ENCODE measurements at regions of chr1 and their contacts with region 1.

Region 1: GRCh38 chr1:248807067-248807737 is 18.5 kb downstream of the SH3BP5L start:
- DNase-seq: peak; percentile 77
- H3K4me3 Mint-ChIP-seq: no peak overlapping the region
- H3K27ac Mint-ChIP-seq: no peak overlapping the region
- H3K4me1 Mint-ChIP-seq: peaks cover 9% of the 10 kb centered on the region
- H3K27me3 Mint-ChIP-seq: no peaks in the 10 kb centered on the region

Region 2: DNA sequence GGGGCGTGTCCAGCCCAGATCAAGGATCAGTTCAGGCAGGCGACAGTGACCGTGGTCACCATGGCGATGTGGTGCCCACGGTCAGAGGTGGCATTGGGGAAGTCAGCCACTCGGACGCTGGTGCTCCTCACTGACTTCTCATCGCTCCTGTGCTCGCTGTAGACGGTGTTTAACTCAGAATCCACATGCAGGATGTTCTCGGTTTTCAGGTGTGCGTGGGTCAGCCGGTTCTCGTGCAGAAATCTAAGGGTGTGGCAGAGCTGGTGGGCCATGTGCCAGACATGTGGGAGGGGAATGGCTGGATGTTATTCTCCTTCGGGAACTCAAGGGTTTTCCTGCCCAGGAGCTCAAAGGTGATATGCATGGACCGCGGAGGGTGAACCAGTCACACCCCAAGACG is 870.8 kb before region 1 on chr1:
- CTCF ChIA-PET with region 1: no interaction called
- intact Hi-C with region 1: loop called (anchors 1 kb)
- DNase-seq: no peak
- H3K4me3 Mint-ChIP-seq: no peak overlapping the region
- H3K27ac Mint-ChIP-seq: no peak overlapping the region
- H3K4me1 Mint-ChIP-seq: no peaks in the 10 kb centered on the region
- H3K27me3 Mint-ChIP-seq: peaks cover 4% of the 10 kb centered on the region

Region 3: DNA sequence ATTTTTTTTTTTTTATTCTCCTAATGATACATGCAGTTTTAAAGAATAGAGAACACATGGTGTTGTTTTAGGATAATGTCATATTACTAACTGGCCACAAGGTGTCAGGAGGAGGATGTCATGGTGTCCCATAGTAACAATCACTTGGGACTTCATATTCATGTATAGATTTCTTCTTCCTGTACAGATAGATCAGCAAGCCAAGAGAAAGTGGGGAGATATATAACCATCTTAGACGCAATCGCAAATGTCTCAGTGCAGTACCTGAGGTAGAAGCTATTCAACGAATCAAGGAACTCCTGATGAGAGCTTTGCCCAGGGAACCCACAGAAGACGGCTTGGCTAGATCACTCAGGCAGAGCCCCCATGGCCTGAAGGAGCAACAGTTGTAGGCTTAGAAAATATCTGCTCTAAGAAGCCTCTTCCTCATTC is 184.6 kb before region 1 on chr1:
- CTCF ChIA-PET with region 1: interaction called, 53 read pairs
- intact Hi-C with region 1: loop called (anchors 1 kb)
- DNase-seq: peak; percentile 19
- H3K4me3 Mint-ChIP-seq: no peak overlapping the region
- H3K27ac Mint-ChIP-seq: no peak overlapping the region
- H3K4me1 Mint-ChIP-seq: peaks cover 2% of the 10 kb centered on the region
- H3K27me3 Mint-ChIP-seq: no peaks in the 10 kb centered on the region

Region 4: DNA sequence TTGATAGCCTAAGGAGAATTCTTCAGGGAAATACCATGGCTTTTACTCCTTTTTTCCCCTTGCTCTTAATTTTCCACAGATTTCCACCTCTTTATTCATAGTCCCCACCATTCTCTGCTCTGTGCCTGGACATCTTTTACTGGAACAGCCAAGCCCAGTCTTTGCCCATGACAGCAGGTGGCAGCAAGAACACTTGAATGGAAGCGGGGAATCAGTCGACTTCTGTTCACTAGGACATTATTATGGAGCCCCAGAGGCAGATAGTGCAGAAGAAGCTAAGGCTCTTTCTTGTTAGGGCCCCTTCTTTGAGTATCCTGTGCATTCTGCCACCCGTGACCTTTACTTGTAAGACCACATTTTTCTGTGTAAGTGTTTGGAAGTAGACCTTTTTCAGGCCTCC is 110.9 kb before region 1 on chr1:
- CTCF ChIA-PET with region 1: interaction called, 4 read pairs
- intact Hi-C with region 1: loop called (anchors 1 kb)
- DNase-seq: peak; percentile 41
- H3K4me3 Mint-ChIP-seq: no peak overlapping the region
- H3K27ac Mint-ChIP-seq: no peak overlapping the region
- H3K4me1 Mint-ChIP-seq: no peaks in the 10 kb centered on the region
- H3K27me3 Mint-ChIP-seq: peaks cover 5% of the 10 kb centered on the region

Region 5: GRCh38 chr1:248793592-248793991 is 13.6 kb before region 1 on chr1:
- CTCF ChIA-PET with region 1: interaction called, 14 read pairs
- intact Hi-C with region 1: no loop called
- DNase-seq: no peak
- H3K4me3 Mint-ChIP-seq: no peak overlapping the region
- H3K27ac Mint-ChIP-seq: no peak overlapping the region
- H3K4me1 Mint-ChIP-seq: no peaks in the 10 kb centered on the region
- H3K27me3 Mint-ChIP-seq: no peaks in the 10 kb centered on the region

Region 6: GRCh38 chr1:248858095-248858890 is 51.1 kb after region 1 on chr1:
- CTCF ChIA-PET with region 1: no interaction called
- intact Hi-C with region 1: no loop called
- DNase-seq: peak; percentile 48
- H3K4me3 Mint-ChIP-seq: peak overlapping the region; percentile 94
- H3K27ac Mint-ChIP-seq: peak overlapping the region; percentile 93
- H3K4me1 Mint-ChIP-seq: peaks cover 64% of the 10 kb centered on the region
- H3K27me3 Mint-ChIP-seq: no peaks in the 10 kb centered on the region

Region 7: GRCh38 chr1:248926401-248927182 is 119.4 kb after region 1 on chr1:
- CTCF ChIA-PET with region 1: no interaction called
- intact Hi-C with region 1: no loop called
- DNase-seq: no peak
- H3K4me3 Mint-ChIP-seq: no peak overlapping the region
- H3K27ac Mint-ChIP-seq: no peak overlapping the region
- H3K4me1 Mint-ChIP-seq: peaks cover 8% of the 10 kb centered on the region
- H3K27me3 Mint-ChIP-seq: no peaks in the 10 kb centered on the region

Measured in activated naive CD4-positive, alpha-beta T cell treated with anti-CD3 and anti-CD28 coated beads for 36 hours (primary cell).